ENCODE measurements at regions of chr16 and their contacts with region 1.

Region 1: GRCh38 chr16:10743610-10744393 is at the start of gene NUBP1:
- DNase-seq: peak; percentile 98 to 100 (median 99)
- ATAC-seq: peak; percentile 95
- H3K4me3 ChIP-seq: peak within 1 kb of the TSS; percentile 84 to 91
- H3K4me3 Mint-ChIP-seq: peak within 1 kb of the TSS; percentile 97
- H3K27ac ChIP-seq: peak within 1 kb of the TSS; percentile 85 to 99
- H3K27ac Mint-ChIP-seq: peak within 1 kb of the TSS; percentile 99
- H3K4me1 ChIP-seq: peaks cover 19% of the 10 kb centered on the region
- H3K4me1 Mint-ChIP-seq: peaks cover 38% of the 10 kb centered on the region
- H3K27me3 ChIP-seq: no peaks in the 10 kb centered on the region
- H3K27me3 Mint-ChIP-seq: no peaks in the 10 kb centered on the region
- CTCF ChIP-seq: no peak
- total RNA-seq, gene NUBP1: 22.8 to 25.1 TPM

Region 2: DNA sequence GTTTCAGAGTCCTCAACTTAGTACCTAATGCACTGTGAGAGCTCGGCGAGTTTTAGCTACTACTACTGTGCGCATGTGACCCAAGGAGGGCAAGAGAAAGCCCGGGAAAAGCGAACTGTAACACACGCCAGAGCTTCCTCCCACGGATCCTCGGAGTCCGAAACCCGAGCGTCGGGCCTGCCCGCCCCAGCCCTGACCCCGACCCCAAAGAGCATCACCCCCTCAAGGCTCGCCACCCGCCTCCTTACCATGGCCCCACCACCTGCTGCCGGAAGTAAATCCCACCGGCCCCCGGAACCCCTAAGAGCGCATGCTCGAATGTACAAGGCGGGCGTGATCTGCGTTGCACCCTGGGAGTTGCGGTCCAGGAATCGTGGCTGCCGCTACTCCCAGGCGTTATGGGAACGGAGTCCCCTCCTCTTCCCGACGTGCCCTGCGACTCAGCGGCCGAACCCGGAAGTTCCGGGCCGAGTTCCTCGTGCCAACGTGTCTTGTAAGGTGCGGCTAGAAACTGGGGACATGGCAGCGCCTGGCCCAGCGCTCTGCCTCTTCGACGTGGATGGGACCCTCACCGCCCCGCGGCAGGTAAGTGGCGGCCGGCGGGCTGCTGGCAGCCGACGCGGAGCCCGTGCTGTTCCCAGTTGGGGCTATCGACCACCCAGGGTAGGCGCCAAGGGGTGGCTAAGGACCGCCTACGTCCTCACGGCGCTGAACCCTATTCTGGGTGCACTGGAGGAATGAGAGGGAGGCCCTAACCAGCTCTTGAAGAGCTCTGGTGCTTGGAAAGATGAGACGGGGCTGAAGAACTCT is 1946.2 kb before region 1 on chr16 and contains the starts of genes PMM2 and TMEM186:
- CTCF ChIA-PET with region 1: no interaction called
- POLR2A ChIA-PET with region 1: no interaction called
- intact Hi-C with region 1: loop called in 1 of 2 experiments (anchors 1 kb)
- DNase-seq: peak; percentile 87 to 98 (median 95)
- ATAC-seq: peak; percentile 95
- H3K4me3 ChIP-seq: peak within 1 kb of the TSS; percentile 77 to 97
- H3K4me3 Mint-ChIP-seq: peak within 1 kb of the TSS; percentile 95
- H3K27ac ChIP-seq: peak within 1 kb of the TSS; percentile 78 to 81
- H3K27ac Mint-ChIP-seq: peak within 1 kb of the TSS; percentile 93
- H3K4me1 ChIP-seq: peaks cover 34% of the 10 kb centered on the region
- H3K4me1 Mint-ChIP-seq: peaks cover 46% of the 10 kb centered on the region
- H3K27me3 ChIP-seq: no peaks in the 10 kb centered on the region
- H3K27me3 Mint-ChIP-seq: no peaks in the 10 kb centered on the region
- CTCF ChIP-seq: no peak
- total RNA-seq, gene PMM2: 29.6 to 32.7 TPM
- total RNA-seq, gene TMEM186: 2.4 to 2.9 TPM

Region 3: GRCh38 chr16:8963825-8964441 is 1779.9 kb before region 1 on chr16 and contains the start of gene USP7:
- CTCF ChIA-PET with region 1: no interaction called
- POLR2A ChIA-PET with region 1: no interaction called
- intact Hi-C with region 1: loop called (anchors 5 kb)
- DNase-seq: peak; percentile 84 to 95 (median 92)
- ATAC-seq: peak; percentile 92
- H3K4me3 ChIP-seq: peak within 1 kb of the TSS; percentile 67 to 73
- H3K4me3 Mint-ChIP-seq: peak within 1 kb of the TSS; percentile 96
- H3K27ac ChIP-seq: peak within 1 kb of the TSS; percentile 72 to 76
- H3K27ac Mint-ChIP-seq: peak within 1 kb of the TSS; percentile 95
- H3K4me1 ChIP-seq: peaks cover 31% of the 10 kb centered on the region
- H3K4me1 Mint-ChIP-seq: peaks cover 38% of the 10 kb centered on the region
- H3K27me3 ChIP-seq: no peaks in the 10 kb centered on the region
- H3K27me3 Mint-ChIP-seq: no peaks in the 10 kb centered on the region
- CTCF ChIP-seq: no peak
- total RNA-seq, gene USP7: 301 to 317 TPM

Region 4: GRCh38 chr16:10385725-10386516 is 357.9 kb before region 1 on chr16 and contains the start of gene ATF7IP2:
- CTCF ChIA-PET with region 1: no interaction called
- POLR2A ChIA-PET with region 1: no interaction called
- intact Hi-C with region 1: loop called (anchors 5 kb)
- DNase-seq: peak; percentile 73 to 92 (median 89)
- ATAC-seq: peak; percentile 96
- H3K4me3 ChIP-seq: peak within 1 kb of the TSS; percentile 89 to 90
- H3K4me3 Mint-ChIP-seq: peak within 1 kb of the TSS; percentile 95
- H3K27ac ChIP-seq: peak within 1 kb of the TSS; percentile 72 to 73
- H3K27ac Mint-ChIP-seq: peak within 1 kb of the TSS; percentile 97
- H3K4me1 ChIP-seq: peaks cover 34% of the 10 kb centered on the region
- H3K4me1 Mint-ChIP-seq: peaks cover 52% of the 10 kb centered on the region
- H3K27me3 ChIP-seq: no peaks in the 10 kb centered on the region
- H3K27me3 Mint-ChIP-seq: no peaks in the 10 kb centered on the region
- CTCF ChIP-seq: no peak
- total RNA-seq, gene ATF7IP2: 88.1 to 98.0 TPM

Region 5: GRCh38 chr16:11345040-11345862 is 601.4 kb after region 1 on chr16 and contains the start of gene RMI2:
- CTCF ChIA-PET with region 1: no interaction called
- POLR2A ChIA-PET with region 1: no interaction called
- intact Hi-C with region 1: loop called in 1 of 2 experiments (anchors 5 kb)
- DNase-seq: peak; percentile 90 to 97 (median 95)
- ATAC-seq: peak; percentile 100
- H3K4me3 ChIP-seq: peak within 1 kb of the TSS; percentile 54 to 60
- H3K4me3 Mint-ChIP-seq: peak within 1 kb of the TSS; percentile 84
- H3K27ac ChIP-seq: no peak within 1 kb of the TSS
- H3K27ac Mint-ChIP-seq: peak within 1 kb of the TSS; percentile 83
- H3K4me1 ChIP-seq: no peaks in the 10 kb centered on the region
- H3K4me1 Mint-ChIP-seq: peaks cover 8% of the 10 kb centered on the region
- H3K27me3 ChIP-seq: no peaks in the 10 kb centered on the region
- H3K27me3 Mint-ChIP-seq: no peaks in the 10 kb centered on the region
- CTCF ChIP-seq: no peak
- total RNA-seq, gene RMI2: 0.69 to 0.73 TPM

Region 6: GRCh38 chr16:11915644-11916523 is 1172.1 kb after region 1 on chr16 and contains the start of gene GSPT1:
- CTCF ChIA-PET with region 1: no interaction called
- POLR2A ChIA-PET with region 1: no interaction called
- intact Hi-C with region 1: loop called (anchors 5 to 10 kb)
- DNase-seq: peak; percentile 98 to 100 (median 99)
- ATAC-seq: peak; percentile 89
- H3K4me3 ChIP-seq: peak within 1 kb of the TSS; percentile 52 to 68
- H3K4me3 Mint-ChIP-seq: peak within 1 kb of the TSS; percentile 94
- H3K27ac ChIP-seq: peak within 1 kb of the TSS; percentile 68 to 75
- H3K27ac Mint-ChIP-seq: peak within 1 kb of the TSS; percentile 98
- H3K4me1 ChIP-seq: peaks cover 24% of the 10 kb centered on the region
- H3K4me1 Mint-ChIP-seq: peaks cover 29% of the 10 kb centered on the region
- H3K27me3 ChIP-seq: no peaks in the 10 kb centered on the region
- H3K27me3 Mint-ChIP-seq: no peaks in the 10 kb centered on the region
- CTCF ChIP-seq: no peak
- total RNA-seq, gene GSPT1: 296 to 297 TPM

Region 7: GRCh38 chr16:12079412-12079965 is 1335.7 kb after region 1 on chr16:
- CTCF ChIA-PET with region 1: no interaction called
- POLR2A ChIA-PET with region 1: no interaction called
- intact Hi-C with region 1: loop called in 1 of 2 experiments (anchors 5 kb)
- DNase-seq: peak in 3 of 9 experiments; percentile 4 to 59 (median 21)
- ATAC-seq: peak; percentile 9
- H3K4me3 ChIP-seq: peak overlapping the region; percentile 12 to 13
- H3K4me3 Mint-ChIP-seq: peak overlapping the region; percentile 65
- H3K27ac ChIP-seq: peak overlapping the region; percentile 55 to 88
- H3K27ac Mint-ChIP-seq: peak overlapping the region; percentile 93
- H3K4me1 ChIP-seq: peaks cover 72% of the 10 kb centered on the region
- H3K4me1 Mint-ChIP-seq: peaks cover 77% of the 10 kb centered on the region
- H3K27me3 ChIP-seq: no peaks in the 10 kb centered on the region
- H3K27me3 Mint-ChIP-seq: no peaks in the 10 kb centered on the region
- CTCF ChIP-seq: no peak

Measured in CD8-positive, alpha-beta T cell (primary cell).